CD8-positive, alpha-beta T cell (primary cell): ENCODE measurements at regions of chr3 and their contacts with region 1.

Region 1: DNA sequence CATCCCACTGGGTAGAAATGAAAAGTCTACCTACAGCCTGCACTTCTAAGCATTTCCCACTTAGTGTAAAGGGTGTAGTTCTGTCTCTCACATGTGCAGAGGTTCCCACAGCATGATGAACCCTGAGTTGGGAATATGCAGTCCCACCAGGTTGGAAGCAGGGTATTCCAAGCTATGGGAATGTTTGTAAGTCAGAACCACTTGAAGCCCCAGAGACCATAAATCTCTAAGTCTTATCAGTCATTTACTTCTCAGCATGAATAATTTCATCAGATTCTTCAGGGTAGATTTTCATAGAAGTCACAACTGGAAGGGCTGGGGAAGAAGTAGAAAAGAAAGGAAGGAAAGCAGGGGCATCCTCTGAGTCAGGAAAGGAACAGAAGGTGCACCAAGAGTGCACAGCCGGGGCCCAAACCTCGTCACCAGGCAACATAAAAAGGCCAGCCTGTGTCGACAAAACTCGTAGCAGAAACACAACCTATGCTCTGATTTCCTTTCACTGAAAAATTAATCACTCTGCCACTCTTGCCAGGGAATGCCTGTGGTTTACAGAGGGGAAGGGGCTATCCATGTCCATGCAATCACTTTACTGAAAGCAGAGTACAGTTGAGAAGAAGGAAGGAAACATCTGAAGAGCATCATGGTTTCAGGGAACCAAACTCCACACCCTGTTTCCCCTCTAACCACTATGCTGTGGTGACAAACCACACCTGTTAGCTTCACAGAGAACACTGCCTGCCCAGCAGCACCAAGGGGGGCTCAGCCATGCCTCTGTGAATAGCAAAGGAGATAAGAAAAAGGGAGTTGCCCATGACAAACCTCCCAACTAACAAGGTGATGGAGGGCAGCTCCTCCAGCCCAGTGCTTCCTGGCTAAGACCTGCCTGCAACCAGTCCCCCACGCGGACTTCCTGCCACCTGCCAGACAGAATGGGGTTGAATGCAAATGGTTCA is 40.5 kb downstream of the SH3BP5 start:
- DNase-seq: peak; percentile 39 to 93 (median 73)
- ATAC-seq: peak; percentile 93
- H3K4me3 ChIP-seq: peak overlapping the region; percentile 19 to 23
- H3K4me3 Mint-ChIP-seq: peak overlapping the region; percentile 70
- H3K27ac ChIP-seq: peak overlapping the region; percentile 14 to 71
- H3K27ac Mint-ChIP-seq: peak overlapping the region; percentile 92
- H3K4me1 ChIP-seq: peaks cover 54% of the 10 kb centered on the region
- H3K4me1 Mint-ChIP-seq: peaks cover 73% of the 10 kb centered on the region
- H3K27me3 ChIP-seq: no peaks in the 10 kb centered on the region
- H3K27me3 Mint-ChIP-seq: no peaks in the 10 kb centered on the region
- CTCF ChIP-seq: no peak

Region 2: DNA sequence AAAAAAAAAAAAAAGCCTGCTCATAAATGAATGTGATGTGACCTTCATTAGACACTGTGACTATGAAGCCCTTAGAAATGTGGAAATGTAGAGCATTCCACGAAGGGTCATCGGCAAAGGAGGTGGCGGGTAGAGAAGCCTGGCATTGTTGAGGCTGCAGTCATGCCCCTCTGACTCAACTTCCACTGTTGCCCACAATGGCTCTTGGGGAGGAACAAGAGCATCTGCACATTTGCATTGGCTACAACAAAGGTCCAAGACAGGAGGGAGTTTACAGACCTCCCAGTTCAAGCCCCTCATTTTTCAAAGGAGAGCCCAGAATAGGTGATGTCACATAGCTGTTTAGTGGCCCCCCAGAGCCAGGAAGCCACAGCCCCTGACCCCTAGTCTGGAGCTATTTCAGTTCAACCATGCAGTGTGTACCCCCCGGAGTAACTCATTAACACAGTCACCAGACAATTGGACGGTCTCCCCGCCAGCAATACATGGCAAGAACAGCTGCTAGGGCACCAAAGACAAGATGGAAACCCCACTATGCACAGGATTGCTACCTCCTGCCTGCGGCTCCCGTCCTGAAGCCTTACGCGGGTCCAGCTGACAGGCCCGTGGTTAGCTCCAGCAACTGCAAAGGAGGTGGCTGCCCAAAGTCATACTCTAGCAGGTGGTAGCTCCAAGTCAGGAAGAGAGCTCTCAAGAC is 15.7 kb before region 1 on chr3:
- CTCF ChIA-PET with region 1: interaction called, 4 read pairs
- POLR2A ChIA-PET with region 1: interaction called, 11 read pairs
- intact Hi-C with region 1: loop called (anchors 1 kb)
- DNase-seq: no peak
- ATAC-seq: no peak
- H3K4me3 ChIP-seq: no peak overlapping the region
- H3K4me3 Mint-ChIP-seq: no peak overlapping the region
- H3K27ac ChIP-seq: peak overlapping the region in 1 of 2 experiments; percentile 60
- H3K27ac Mint-ChIP-seq: no peak overlapping the region
- H3K4me1 ChIP-seq: peaks cover 48% of the 10 kb centered on the region
- H3K4me1 Mint-ChIP-seq: peaks cover 62% of the 10 kb centered on the region
- H3K27me3 ChIP-seq: no peaks in the 10 kb centered on the region
- H3K27me3 Mint-ChIP-seq: no peaks in the 10 kb centered on the region
- CTCF ChIP-seq: no peak

Region 3: GRCh38 chr3:15498431-15499214 is 206.8 kb after region 1 on chr3:
- CTCF ChIA-PET with region 1: no interaction called
- POLR2A ChIA-PET with region 1: no interaction called
- intact Hi-C with region 1: no loop called
- DNase-seq: no peak
- ATAC-seq: no peak
- H3K4me3 ChIP-seq: no peak overlapping the region
- H3K4me3 Mint-ChIP-seq: no peak overlapping the region
- H3K27ac ChIP-seq: no peak overlapping the region
- H3K27ac Mint-ChIP-seq: no peak overlapping the region
- H3K4me1 ChIP-seq: no peaks in the 10 kb centered on the region
- H3K4me1 Mint-ChIP-seq: peaks cover 16% of the 10 kb centered on the region
- H3K27me3 ChIP-seq: no peaks in the 10 kb centered on the region
- H3K27me3 Mint-ChIP-seq: no peaks in the 10 kb centered on the region
- CTCF ChIP-seq: no peak